ENCODE measurements at regions of chr1 and their contacts with region 1.

Region 1: GRCh38 chr1:165367375-165367993 is 11.0 kb upstream of the LMX1A start:
- DNase-seq: peak; percentile 81
- H3K4me3 ChIP-seq: no peak overlapping the region
- H3K27ac ChIP-seq: no peak overlapping the region
- H3K4me1 ChIP-seq: no peaks in the 10 kb centered on the region
- H3K27me3 ChIP-seq: no peaks in the 10 kb centered on the region
- CTCF ChIP-seq: peak; percentile 92

Region 2: GRCh38 chr1:165144757-165145397 is 222.6 kb before region 1 on chr1:
- intact Hi-C with region 1: loop called (anchors 5 kb)
- DNase-seq: peak; percentile 49
- H3K4me3 ChIP-seq: no peak overlapping the region
- H3K27ac ChIP-seq: no peak overlapping the region
- H3K4me1 ChIP-seq: no peaks in the 10 kb centered on the region
- H3K27me3 ChIP-seq: no peaks in the 10 kb centered on the region
- CTCF ChIP-seq: peak; percentile 63

Region 3: DNA sequence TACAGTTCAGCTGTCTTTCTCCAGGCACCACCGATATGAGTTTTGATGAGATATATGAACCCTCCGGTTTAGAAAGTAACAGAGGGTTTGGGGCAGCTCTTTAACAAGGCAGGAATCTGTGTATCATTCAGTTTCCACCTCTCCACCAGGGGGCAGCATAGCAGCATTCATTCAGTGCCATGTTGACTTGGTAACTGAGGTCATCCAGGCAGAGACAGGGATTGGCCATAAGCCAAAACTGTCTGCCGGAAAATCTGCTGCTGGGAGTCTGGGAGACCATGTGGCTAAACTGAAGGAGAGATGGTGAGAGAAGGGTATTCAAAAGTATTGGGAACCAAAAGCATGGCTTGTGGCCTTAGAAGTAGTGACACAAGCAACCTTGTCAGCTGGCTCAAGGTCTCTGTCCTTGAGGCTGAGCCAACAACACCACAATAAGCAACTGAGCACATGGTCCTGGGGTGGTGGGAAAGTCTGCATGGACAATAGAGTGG is 109.5 kb before region 1 on chr1:
- intact Hi-C with region 1: loop called (anchors 1 kb)
- DNase-seq: peak; percentile 90
- H3K4me3 ChIP-seq: no peak overlapping the region
- H3K27ac ChIP-seq: no peak overlapping the region
- H3K4me1 ChIP-seq: no peaks in the 10 kb centered on the region
- H3K27me3 ChIP-seq: no peaks in the 10 kb centered on the region
- CTCF ChIP-seq: peak; percentile 66

Region 4: DNA sequence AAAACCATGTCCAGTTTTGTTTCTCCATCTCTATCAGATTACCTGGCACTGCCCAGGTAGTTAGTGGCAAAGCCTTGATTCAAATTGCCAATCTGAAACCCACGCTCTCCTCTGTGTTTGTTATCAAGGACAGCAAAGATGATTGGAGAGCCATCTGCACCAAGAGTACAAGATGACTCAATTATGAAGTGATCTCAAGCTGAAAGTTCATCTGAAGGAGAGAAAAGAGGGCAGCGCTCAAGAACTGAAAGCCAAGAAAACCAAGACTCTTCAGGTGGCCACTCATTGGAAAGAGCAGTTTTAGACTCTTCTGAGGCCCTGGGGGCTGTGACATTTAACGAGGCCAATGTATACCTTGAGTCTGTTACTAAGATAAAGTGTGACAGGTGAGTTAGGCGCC is 63.6 kb after region 1 on chr1:
- intact Hi-C with region 1: no loop called
- DNase-seq: no peak
- H3K4me3 ChIP-seq: no peak overlapping the region
- H3K27ac ChIP-seq: no peak overlapping the region
- H3K4me1 ChIP-seq: no peaks in the 10 kb centered on the region
- H3K27me3 ChIP-seq: no peaks in the 10 kb centered on the region
- CTCF ChIP-seq: no peak